Astrocyte of the cerebellum (primary cell): ENCODE measurements at regions of chr6 and their contacts with region 1.

Region 1: GRCh38 chr6:134169871-134170486 is 117.6 kb upstream of the SLC2A12 start:
- DNase-seq: no peak
- H3K4me3 ChIP-seq: peak overlapping the region; percentile 98
- CTCF ChIP-seq: no peak

Region 2: GRCh38 chr6:134669485-134669884 is 499.5 kb after region 1 on chr6:
- in situ Hi-C with region 1: loop called (anchors 5 kb)
- DNase-seq: no peak
- H3K4me3 ChIP-seq: no peak overlapping the region
- CTCF ChIP-seq: no peak

Region 3: GRCh38 chr6:134938896-134939295 is 768.9 kb after region 1 on chr6:
- in situ Hi-C with region 1: loop called (anchors 5 kb)
- DNase-seq: no peak
- H3K4me3 ChIP-seq: no peak overlapping the region
- CTCF ChIP-seq: no peak